Activated naive CD4-positive, alpha-beta T cell treated with anti-CD3 and anti-CD28 coated beads, Interleukin-2, amount 10 ng/mL, durations not matched to agents 7 days and 5 days (primary cell): ENCODE measurements at regions of chr1 and their contacts with region 1.

Region 1: GRCh38 chr1:201970334-201971159 is 11.9 kb upstream of the RNPEP start:
- DNase-seq: no peak
- H3K4me3 Mint-ChIP-seq: no peak overlapping the region
- H3K27ac Mint-ChIP-seq: no peak overlapping the region
- H3K4me1 Mint-ChIP-seq: no peaks in the 10 kb centered on the region
- H3K27me3 Mint-ChIP-seq: peaks cover 10% of the 10 kb centered on the region

Region 2: DNA sequence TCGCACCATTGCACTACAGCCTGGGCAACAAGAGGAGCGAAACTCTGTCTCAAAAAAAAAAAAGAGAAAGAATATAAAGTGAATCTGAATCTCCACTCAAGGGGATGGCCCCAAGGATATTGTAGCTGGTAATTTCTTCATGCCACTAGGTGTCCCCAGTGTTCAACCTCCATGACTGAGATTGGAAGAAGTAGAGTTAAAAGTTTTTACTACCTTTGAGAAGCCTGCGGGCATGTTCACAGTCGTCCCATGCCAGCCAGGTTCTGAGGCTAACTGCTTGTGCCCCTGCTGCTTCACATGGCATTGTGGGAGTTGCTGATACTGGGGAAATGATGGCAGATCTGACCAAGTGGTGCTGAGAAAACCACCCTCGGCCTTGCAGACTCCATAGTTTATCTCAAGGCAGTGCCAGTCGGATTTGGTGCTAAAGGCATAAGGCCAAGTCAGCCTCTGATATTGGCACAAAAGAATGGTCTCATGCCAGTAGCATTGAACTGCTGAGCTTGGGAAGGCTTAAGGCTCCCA is 92.6 kb before region 1 on chr1:
- CTCF ChIA-PET with region 1: interaction called, 19 read pairs
- DNase-seq: peak; percentile 34
- H3K4me3 Mint-ChIP-seq: no peak overlapping the region
- H3K27ac Mint-ChIP-seq: no peak overlapping the region
- H3K4me1 Mint-ChIP-seq: no peaks in the 10 kb centered on the region
- H3K27me3 Mint-ChIP-seq: no peaks in the 10 kb centered on the region

Region 3: DNA sequence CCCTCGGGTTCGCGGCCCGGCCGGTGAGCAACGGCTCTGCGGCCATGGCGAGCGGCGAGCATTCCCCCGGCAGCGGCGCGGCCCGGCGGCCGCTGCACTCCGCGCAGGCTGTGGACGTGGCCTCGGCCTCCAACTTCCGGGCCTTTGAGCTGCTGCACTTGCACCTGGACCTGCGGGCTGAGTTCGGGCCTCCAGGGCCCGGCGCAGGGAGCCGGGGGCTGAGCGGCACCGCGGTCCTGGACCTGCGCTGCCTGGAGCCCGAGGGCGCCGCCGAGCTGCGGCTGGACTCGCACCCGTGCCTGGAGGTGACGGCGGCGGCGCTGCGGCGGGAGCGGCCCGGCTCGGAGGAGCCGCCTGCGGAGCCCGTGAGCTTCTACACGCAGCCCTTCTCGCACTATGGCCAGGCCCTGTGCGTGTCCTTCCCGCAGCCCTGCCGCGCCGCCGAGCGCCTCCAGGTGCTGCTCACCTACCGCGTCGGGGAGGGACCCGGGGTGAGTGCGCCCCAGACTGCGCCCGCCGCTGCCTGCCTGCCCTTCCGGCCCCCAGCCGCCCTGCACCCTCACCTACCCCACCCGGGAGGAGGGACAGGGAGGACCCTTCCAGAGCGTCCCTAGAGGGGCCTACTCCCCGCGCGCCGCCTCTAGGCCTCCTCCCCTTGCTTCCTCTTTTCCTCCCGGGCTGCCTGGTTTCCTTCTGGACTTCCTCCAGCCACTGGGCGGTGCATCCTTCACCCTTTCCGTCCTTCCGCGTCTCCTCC is 12.3 kb after region 1 on chr1 and contains the start of gene RNPEP:
- CTCF ChIA-PET with region 1: interaction called, 13 read pairs
- DNase-seq: peak; percentile 74
- H3K4me3 Mint-ChIP-seq: peak within 1 kb of the TSS; percentile 89
- H3K27ac Mint-ChIP-seq: peak within 1 kb of the TSS; percentile 82
- H3K4me1 Mint-ChIP-seq: peaks cover 20% of the 10 kb centered on the region
- H3K27me3 Mint-ChIP-seq: peaks cover 15% of the 10 kb centered on the region

Region 4: GRCh38 chr1:202018468-202019255 is 48.1 kb after region 1 on chr1:
- CTCF ChIA-PET with region 1: no interaction called
- DNase-seq: no peak
- H3K4me3 Mint-ChIP-seq: no peak overlapping the region
- H3K27ac Mint-ChIP-seq: no peak overlapping the region
- H3K4me1 Mint-ChIP-seq: peaks cover 4% of the 10 kb centered on the region
- H3K27me3 Mint-ChIP-seq: peaks cover 20% of the 10 kb centered on the region

Region 5: DNA sequence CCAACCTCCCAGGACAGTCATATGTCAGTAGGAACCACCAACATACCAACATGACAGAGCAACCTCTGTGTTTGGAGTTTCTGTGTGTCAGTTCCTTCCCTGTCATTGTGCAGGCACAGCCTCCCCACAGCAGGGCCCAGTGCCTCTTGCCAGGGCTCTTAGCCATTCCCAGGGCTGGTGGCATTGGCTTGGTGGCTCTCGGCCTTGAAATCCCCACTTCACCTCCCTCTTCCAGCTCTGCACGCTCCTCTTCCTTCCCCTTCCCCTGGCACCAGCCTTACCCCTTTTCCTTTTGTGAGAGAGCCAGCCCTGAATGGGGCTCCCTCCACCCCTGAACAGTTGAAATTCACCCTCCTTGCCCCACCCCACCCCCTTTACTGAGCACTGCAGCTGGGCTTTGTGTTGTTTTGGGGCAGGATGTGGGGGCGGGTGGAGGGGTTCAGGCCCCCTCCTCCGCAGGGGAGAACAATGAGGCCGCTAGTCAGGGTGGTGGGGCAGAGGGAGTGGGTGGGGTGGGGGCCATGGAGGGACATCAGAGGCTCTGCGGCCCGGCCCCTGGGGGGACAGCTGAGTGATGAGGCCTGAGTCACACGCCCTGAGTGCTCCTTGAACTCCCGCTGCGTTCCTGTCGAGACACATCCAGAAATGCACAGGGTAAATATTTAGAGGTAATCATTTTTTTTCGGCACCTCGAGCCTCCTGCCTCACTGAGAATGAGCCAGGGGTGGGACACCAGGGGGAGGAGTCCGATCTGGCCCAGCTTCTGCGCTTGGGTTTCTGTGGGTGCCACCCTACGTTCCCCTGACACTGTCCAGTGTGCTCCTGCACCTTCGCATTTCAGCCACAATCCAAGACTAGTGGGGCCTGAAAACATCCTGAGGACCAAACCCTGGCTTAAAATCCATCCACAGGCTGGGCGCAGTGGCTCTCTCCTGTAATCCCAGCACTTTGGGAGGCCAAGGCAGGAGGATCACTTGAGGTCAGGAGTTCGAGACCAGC is 251.7 kb after region 1 on chr1:
- CTCF ChIA-PET with region 1: no interaction called
- DNase-seq: no peak
- H3K4me3 Mint-ChIP-seq: no peak overlapping the region
- H3K27ac Mint-ChIP-seq: no peak overlapping the region
- H3K4me1 Mint-ChIP-seq: peaks cover 5% of the 10 kb centered on the region
- H3K27me3 Mint-ChIP-seq: peaks cover 76% of the 10 kb centered on the region